Esophagus muscularis mucosa (tissue), 4 donors: ENCODE measurements at regions of chr11 and their contacts with region 1.

Region 1: GRCh38 chr11:121534131-121535093 is 81.6 kb upstream of the SORL1-AS1 start:
- DNase-seq: no peak
- H3K4me3 ChIP-seq: no peak overlapping the region
- H3K27ac ChIP-seq: no peak overlapping the region
- H3K4me1 ChIP-seq: peaks cover 0 to 7% (median 3%) of the 10 kb centered on the region in 4 donors
- H3K27me3 ChIP-seq: no peaks in the 10 kb centered on the region
- CTCF ChIP-seq: peak; percentile 50 to 61 (median 60)
- EP300 ChIP-seq: no peak
- POLR2A ChIP-seq: no peak

Region 2: DNA sequence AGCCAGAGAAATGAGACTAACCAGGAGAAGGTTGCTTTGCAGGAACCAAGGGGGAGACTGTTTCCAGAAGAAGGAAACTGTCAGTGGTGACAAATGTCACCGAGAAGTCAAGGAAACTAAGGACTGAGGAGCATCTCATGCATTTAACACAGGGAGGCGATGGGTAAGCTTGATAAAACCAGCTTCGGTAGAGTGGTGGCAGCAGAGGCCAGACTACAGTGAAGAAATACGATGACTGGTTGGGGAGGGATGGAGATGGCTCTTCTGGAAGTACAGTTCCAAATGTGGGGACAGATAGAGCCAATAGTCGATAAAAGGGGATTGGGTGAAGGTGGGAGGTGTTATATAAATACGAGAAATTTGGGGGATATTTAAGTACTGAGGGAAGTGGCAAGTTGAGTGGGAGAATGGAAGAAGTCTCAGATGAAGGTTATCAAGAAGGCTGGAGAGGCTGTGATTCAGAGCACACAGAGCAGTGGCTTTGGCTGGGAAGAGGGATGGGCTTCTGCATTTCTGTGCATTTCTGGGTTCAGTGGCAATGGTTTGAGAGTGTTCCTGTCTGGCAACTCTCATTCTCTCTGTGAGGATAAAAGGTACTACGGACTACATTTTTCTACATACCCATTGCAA is 212.7 kb before region 1 on chr11:
- intact Hi-C with region 1: loop called (anchors 5 kb)
- DNase-seq: no peak
- H3K4me3 ChIP-seq: no peak overlapping the region
- H3K27ac ChIP-seq: no peak overlapping the region
- H3K4me1 ChIP-seq: no peaks in the 10 kb centered on the region
- H3K27me3 ChIP-seq: no peaks in the 10 kb centered on the region
- CTCF ChIP-seq: peak; percentile 43 to 49 (median 46)
- EP300 ChIP-seq: no peak
- POLR2A ChIP-seq: no peak

Region 3: GRCh38 chr11:121451986-121452608 is 82.3 kb before region 1 on chr11 and contains the start of gene SORL1:
- intact Hi-C with region 1: loop called (anchors 5 kb)
- DNase-seq: no peak
- H3K4me3 ChIP-seq: peak within 1 kb of the TSS; percentile 78 to 90 (median 81)
- H3K27ac ChIP-seq: peak within 1 kb of the TSS; percentile 40 to 66 (median 60)
- H3K4me1 ChIP-seq: peaks cover 4 to 28% (median 23%) of the 10 kb centered on the region in 4 donors
- H3K27me3 ChIP-seq: peaks cover 0 to 13% (median 0%) of the 10 kb centered on the region in 4 donors
- CTCF ChIP-seq: peak; percentile 63 to 67 (median 67)
- EP300 ChIP-seq: no peak
- POLR2A ChIP-seq: no peak
- total RNA-seq, gene SORL1: 3.0 to 12.3 (median 8.1) TPM